ENCODE measurements at regions of chr2 and their contacts with region 1.

Region 1: DNA sequence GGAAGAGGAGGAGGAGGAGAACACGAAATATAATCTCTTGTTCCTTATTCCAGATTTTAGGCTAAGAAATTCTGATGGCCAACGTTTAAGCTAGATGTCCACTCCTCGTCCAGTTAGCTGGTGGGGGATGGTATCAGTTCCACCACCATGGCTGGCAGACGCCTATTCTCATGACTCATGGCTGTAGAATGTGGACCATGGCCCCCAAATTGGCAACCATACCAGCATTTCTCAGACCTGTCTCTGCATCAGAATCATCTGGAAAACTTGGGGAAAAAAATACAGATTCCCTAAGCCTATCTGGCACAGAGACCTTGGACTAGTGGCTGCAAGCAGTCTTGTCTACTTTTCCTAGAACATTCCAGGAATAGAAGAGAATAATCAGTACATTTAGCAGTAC is 267.7 kb upstream of the SIX2 start:
- DNase-seq: no peak
- H3K4me3 ChIP-seq: no peak overlapping the region
- H3K27ac ChIP-seq: no peak overlapping the region
- H3K4me1 ChIP-seq: peaks cover 0 to 17% (median 7%) of the 10 kb centered on the region in 4 experiments; a peak in 4 of 7 replicates
- H3K27me3 ChIP-seq: no peaks in the 10 kb centered on the region
- CTCF ChIP-seq: no peak
- EP300 ChIP-seq: no peak
- POLR2A ChIP-seq: no peak
- RAD21 ChIP-seq: no peak

Region 2: DNA sequence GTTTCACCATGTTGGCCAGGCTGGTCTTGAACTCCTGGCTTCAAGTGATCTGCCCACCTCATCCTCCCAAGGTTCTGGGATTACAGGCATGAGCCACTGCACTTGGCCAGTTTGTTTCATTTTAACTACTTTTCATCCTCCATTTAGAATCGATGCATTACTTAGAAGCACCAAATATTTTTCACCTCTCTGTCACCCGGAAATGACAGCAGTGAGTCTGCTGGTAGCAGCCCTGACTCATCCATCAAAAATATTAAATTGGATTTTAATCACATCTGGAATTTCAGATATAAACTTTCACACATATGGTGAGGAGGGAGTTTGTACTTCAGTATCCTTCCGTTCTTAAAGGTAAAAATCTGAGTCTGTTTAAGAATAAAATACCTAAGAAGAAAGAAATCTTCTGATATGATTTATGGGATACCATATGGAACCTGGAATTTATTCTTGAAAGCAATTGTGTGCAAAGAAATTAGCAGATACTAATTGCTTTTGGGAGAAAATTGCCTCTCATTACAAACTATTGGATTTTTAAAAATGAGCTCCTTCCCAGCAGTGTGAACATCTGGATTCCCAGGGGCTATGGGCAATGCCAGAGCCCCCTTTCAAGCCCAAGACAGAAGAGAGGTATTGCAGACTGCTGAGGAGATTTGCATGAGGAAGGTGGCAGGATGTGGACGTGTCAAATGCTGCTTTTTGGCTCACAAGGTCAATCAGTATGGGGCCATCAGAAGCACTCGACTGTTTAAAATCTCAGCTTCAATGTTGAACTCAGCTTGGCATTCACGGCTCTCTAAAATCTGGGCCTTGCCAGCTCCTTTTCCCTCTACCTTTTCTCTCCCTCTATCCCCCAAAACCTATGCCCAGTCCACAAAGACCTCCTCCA is 11.9 kb after region 1 on chr2:
- CTCF ChIA-PET with region 1: interaction called, 11 read pairs
- POLR2A ChIA-PET with region 1: no interaction called
- DNase-seq: no peak
- H3K4me3 ChIP-seq: no peak overlapping the region
- H3K27ac ChIP-seq: no peak overlapping the region
- H3K4me1 ChIP-seq: peaks cover 0 to 2% (median 0%) of the 10 kb centered on the region in 4 experiments; a peak in 1 of 7 replicates
- H3K27me3 ChIP-seq: no peaks in the 10 kb centered on the region
- CTCF ChIP-seq: no peak
- EP300 ChIP-seq: no peak
- POLR2A ChIP-seq: no peak
- RAD21 ChIP-seq: no peak

Region 3: DNA sequence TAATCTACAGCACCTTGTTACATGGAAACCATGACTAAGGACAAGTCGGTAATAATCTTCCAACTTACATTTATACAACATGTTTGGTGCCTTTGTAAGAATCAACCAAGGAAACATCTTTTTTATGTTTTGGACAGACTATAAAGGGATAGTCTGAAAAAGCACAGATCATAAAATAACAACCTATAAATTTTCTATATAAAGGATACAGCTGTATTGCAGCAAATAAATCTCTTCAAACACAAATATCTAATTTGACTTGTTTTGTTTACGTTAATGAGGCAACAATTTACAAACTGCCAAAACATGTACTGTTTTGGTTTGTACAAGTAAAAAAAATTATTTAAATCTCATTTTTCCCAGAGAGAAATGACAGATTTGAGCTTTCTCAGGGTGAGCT is 241.6 kb after region 1 on chr2:
- CTCF ChIA-PET with region 1: no interaction called
- POLR2A ChIA-PET with region 1: no interaction called
- DNase-seq: no peak
- H3K4me3 ChIP-seq: no peak overlapping the region
- H3K27ac ChIP-seq: no peak overlapping the region
- H3K4me1 ChIP-seq: no peaks in the 10 kb centered on the region
- H3K27me3 ChIP-seq: no peaks in the 10 kb centered on the region
- CTCF ChIP-seq: no peak
- EP300 ChIP-seq: no peak
- POLR2A ChIP-seq: no peak
- RAD21 ChIP-seq: no peak

Region 4: DNA sequence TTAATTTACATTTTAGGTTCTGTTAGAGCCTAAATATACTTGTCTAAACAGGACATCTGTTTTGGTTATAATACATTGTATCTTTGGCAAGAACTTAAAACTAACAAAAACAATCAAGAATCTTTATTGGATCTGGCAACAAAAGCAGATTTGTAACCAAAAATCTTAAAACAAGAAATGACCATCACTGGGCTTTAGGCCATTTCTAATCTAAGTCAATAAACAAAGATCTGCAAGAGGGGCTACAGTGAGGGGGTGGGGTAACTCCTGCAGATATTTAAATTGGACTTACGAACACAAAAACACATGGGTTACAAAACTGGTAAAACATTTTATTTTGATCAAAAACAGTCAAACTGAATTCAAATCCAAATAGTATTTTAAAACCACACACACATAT is 256.9 kb after region 1 on chr2:
- CTCF ChIA-PET with region 1: no interaction called
- POLR2A ChIA-PET with region 1: no interaction called
- DNase-seq: no peak
- H3K4me3 ChIP-seq: no peak overlapping the region
- H3K27ac ChIP-seq: no peak overlapping the region
- H3K4me1 ChIP-seq: no peaks in the 10 kb centered on the region
- H3K27me3 ChIP-seq: no peaks in the 10 kb centered on the region
- CTCF ChIP-seq: no peak
- EP300 ChIP-seq: no peak
- POLR2A ChIP-seq: no peak
- RAD21 ChIP-seq: no peak